MCF 10A (cell line): ENCODE measurements at regions of chr12 and their contacts with region 1.

Region 1: DNA sequence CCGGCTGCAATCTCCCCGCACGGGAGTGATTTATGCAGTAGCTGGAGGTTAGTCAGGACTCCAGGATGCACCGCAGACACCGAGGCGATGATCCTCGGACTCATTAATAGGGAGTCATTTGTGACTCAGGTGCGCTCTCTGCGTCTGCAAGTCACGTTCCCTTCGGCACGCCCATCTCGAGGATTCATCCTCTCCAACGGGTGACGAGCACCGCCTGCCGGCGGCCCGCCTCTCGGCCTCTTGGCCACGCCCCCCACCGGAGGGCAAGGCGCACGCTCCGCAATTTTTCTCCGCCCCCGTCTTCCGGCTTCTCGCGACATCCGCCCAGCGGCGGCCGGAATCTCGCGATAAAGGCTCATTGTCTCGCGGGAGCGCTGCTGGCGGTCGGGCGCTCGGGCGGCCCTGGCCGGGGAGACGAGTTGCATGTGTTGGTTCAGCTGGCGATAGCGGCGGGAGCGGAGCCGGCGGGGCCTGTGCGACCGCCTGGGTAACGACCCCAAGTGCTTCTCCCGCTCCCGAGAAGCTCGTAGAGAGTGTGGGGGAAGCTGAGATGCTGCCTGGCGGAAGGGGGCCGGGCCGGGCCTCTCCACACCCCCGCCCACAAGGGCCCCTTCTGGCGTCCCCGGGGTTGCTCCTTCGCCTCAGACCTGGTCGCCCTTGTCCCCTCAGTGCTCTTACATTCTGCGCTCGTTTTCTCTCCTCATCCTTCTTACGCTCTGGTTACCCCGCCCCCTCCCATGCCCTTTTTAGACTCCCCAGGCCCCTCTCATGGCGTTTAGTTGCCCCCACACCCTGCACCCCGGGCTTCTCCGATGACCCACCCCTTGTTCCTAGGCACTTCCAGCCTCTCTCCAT is at the start of gene DENR:
- DNase-seq: peak; percentile 98
- H3K4me3 Mint-ChIP-seq: peak within 1 kb of the TSS; percentile 91
- H3K27ac Mint-ChIP-seq: peak within 1 kb of the TSS; percentile 96
- H3K4me1 Mint-ChIP-seq: peaks cover 34% of the 10 kb centered on the region
- H3K27me3 Mint-ChIP-seq: no peaks in the 10 kb centered on the region
- CTCF ChIP-seq: peak; percentile 86
- total RNA-seq, gene DENR: 87.9 and 104 TPM in 2 replicates

Region 2: GRCh38 chr12:122526683-122527477 is 225.8 kb before region 1 on chr12 and contains the starts of genes KNTC1 and RSRC2:
- CTCF ChIA-PET with region 1: no interaction called
- POLR2A ChIA-PET with region 1: interaction called, 6 read pairs
- intact Hi-C with region 1: loop called (anchors 10 kb)
- DNase-seq: peak; percentile 100
- H3K4me3 Mint-ChIP-seq: no peak within 1 kb of the TSS
- H3K27ac Mint-ChIP-seq: no peak within 1 kb of the TSS
- H3K4me1 Mint-ChIP-seq: peaks cover 7% of the 10 kb centered on the region
- H3K27me3 Mint-ChIP-seq: no peaks in the 10 kb centered on the region
- CTCF ChIP-seq: no peak
- total RNA-seq, gene KNTC1: 18.0 and 26.1 TPM in 2 replicates
- total RNA-seq, gene RSRC2: 74.9 and 93.4 TPM in 2 replicates

Region 3: GRCh38 chr12:122669397-122670070 is 83.2 kb before region 1 on chr12:
- CTCF ChIA-PET with region 1: interaction called, 4 read pairs
- POLR2A ChIA-PET with region 1: interaction called, 11 read pairs
- intact Hi-C with region 1: no loop called
- DNase-seq: peak; percentile 45
- H3K4me3 Mint-ChIP-seq: no peak overlapping the region
- H3K27ac Mint-ChIP-seq: no peak overlapping the region
- H3K4me1 Mint-ChIP-seq: peaks cover 8% of the 10 kb centered on the region
- H3K27me3 Mint-ChIP-seq: no peaks in the 10 kb centered on the region
- CTCF ChIP-seq: no peak

Region 4: GRCh38 chr12:122767691-122768090 is 15.0 kb after region 1 on chr12:
- CTCF ChIA-PET with region 1: no interaction called
- POLR2A ChIA-PET with region 1: interaction called, 13 read pairs
- intact Hi-C with region 1: no loop called
- DNase-seq: no peak
- H3K4me3 Mint-ChIP-seq: no peak overlapping the region
- H3K27ac Mint-ChIP-seq: no peak overlapping the region
- H3K4me1 Mint-ChIP-seq: peaks cover 6% of the 10 kb centered on the region
- H3K27me3 Mint-ChIP-seq: no peaks in the 10 kb centered on the region
- CTCF ChIP-seq: no peak

Region 5: DNA sequence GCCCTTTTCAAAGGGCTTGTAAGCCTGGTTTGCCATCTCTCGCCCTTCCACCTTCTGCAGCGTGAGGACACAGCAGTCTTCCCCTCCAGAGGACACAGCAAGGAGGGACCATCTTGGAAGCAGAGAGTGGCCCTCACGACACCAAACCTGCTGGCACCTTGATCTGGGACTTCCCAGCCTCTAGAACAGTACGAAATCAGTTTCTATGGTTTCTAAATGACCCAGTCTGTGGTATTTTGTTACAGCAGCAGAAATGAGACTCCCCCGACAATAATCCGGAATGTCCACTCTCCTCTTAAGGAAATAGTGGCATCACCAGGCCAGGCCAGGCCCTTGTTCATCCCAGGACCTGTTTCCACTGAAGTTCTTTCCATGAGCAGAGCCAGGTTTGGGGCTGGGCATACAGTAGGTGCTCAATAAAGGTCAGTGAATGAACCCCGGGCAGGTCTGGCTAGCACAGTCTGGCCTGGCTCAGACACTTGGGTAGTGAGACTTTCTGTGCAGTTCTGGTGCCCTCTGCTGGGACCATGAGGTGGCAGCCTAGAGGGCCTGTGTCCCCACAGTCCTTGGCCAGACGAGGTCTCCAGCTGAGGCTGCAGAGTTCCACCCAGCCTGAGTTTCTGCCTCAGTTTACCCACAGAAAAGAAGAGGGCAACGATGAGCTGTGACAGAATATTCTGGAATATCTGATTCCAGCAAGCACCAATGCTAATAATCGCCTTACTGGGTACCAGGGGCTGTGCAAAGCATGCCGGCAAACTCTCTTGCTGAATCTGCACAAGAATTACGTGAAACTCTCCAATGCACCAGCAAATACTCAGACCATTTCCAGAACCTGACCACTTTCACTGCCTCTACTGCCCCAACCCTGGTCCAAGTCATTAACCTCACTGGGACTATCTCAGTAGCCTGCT is 199.5 kb after region 1 on chr12:
- CTCF ChIA-PET with region 1: no interaction called
- POLR2A ChIA-PET with region 1: no interaction called
- intact Hi-C with region 1: loop called (anchors 5 kb)
- DNase-seq: peak; percentile 81
- H3K4me3 Mint-ChIP-seq: no peak overlapping the region
- H3K27ac Mint-ChIP-seq: no peak overlapping the region
- H3K4me1 Mint-ChIP-seq: peaks cover 8% of the 10 kb centered on the region
- H3K27me3 Mint-ChIP-seq: no peaks in the 10 kb centered on the region
- CTCF ChIP-seq: peak; percentile 87